Colonic mucosa (tissue), 4 donors: ENCODE measurements at regions of chr7 and their contacts with region 1.

Region 1: GRCh38 chr7:31488562-31489203 is 25.2 kb upstream of the ITPRID1 start:
- DNase-seq: peak; percentile 60
- H3K4me3 ChIP-seq: no peak overlapping the region
- H3K27ac ChIP-seq: no peak overlapping the region
- H3K4me1 ChIP-seq: no peaks in the 10 kb centered on the region
- H3K27me3 ChIP-seq: no peaks in the 10 kb centered on the region
- CTCF ChIP-seq: peak; percentile 69

Region 2: DNA sequence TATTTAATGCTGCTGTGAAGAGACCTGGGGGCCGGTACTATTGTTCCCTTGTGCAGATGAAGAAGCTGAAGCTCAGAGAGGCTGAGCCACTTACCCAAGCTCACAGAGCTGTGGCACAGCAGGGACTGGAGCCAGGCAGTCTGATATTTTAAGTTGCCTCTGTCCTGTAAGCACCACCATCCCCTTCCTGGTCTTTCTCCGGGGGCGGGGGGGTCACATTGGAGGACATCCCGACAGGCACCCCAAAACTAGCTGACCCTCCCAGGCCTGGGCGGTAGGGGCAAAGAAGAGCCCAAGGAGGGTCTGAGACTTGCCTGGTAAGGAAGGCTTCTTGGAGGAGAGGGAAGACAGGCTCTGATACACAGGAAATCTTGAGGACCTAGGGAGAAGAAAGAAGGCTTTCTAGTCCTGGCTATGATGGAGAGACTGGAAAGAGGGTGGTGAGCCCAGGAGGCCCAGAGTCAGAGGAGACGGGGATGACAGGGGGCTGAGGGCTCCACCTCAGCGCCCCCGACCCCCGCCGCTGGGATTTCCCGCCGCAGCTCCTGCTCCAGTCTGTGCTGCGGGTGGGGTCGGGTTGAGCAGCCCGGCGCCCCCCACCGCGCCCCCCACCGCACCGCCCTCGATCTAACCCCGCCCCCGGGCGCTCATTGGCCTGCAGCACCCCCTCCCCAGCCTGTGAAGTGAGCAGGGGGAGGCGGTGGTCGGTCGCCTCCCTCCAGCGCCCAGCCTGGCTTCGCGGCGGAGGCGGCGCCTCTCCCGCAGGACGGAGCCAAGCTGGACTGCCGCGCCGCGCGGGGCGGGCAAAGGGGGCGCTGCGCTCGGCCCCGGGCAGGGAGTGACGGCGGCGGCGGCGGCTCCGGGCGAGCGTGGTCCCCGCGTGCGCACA is 436.8 kb before region 1 on chr7 and contains the start of gene ADCYAP1R1:
- intact Hi-C with region 1: no loop called
- DNase-seq: no peak
- H3K4me3 ChIP-seq: peak within 1 kb of the TSS; percentile 7
- H3K27ac ChIP-seq: no peak within 1 kb of the TSS
- H3K4me1 ChIP-seq: no peaks in the 10 kb centered on the region
- H3K27me3 ChIP-seq: peaks cover 16% of the 10 kb centered on the region
- CTCF ChIP-seq: no peak
- total RNA-seq, gene ADCYAP1R1: 0.37 to 0.90 TPM

Region 3: DNA sequence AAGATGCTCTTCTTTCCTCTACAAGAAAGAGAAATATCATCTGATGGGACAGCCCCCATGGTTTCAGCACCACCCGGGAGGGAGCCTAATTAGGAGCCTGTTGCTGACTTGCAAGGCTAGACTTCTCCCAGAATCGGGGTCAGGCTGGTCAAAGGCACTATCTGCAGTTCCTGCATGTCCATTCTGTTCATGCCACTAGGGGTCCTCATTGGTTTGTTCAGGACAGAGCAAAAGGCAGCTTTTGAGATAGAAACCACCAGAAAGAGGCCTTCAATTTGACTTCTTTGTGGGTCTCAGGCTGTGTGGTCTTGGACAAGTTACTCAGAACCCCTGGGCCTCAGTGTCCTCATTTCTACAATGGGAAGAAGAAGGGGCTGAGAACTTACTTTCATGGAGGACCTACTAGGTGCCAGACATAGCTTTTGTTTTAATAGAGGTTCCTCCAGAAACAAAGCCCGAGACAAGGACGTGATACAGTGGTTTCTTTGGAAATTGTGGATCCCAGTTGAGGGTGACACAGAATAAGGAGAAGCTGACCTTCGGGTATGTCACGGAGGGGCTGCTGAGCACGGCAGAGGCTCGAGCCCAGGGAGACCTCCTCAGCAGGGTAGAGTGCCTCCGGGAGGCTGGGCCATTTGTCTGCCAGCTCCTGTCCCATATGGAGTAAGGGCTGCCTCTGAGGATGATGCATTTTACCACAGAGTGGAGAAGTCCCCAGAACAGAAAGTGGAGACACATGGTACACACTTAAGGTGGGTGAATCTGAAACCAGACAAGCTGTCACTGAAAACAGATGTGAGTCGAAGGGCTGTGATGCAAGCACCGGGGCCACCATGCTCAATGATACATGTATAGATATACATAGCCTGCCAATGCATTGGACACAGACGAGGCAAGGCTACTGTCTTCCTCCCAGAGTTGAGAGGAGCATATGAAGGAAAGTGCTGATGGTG is 115.1 kb before region 1 on chr7:
- intact Hi-C with region 1: loop called (anchors 5 kb)
- DNase-seq: peak; percentile 58
- H3K4me3 ChIP-seq: no peak overlapping the region
- H3K27ac ChIP-seq: no peak overlapping the region
- H3K4me1 ChIP-seq: no peaks in the 10 kb centered on the region
- H3K27me3 ChIP-seq: no peaks in the 10 kb centered on the region
- CTCF ChIP-seq: peak; percentile 54

Region 4: GRCh38 chr7:31948029-31948428 is 459.3 kb after region 1 on chr7:
- intact Hi-C with region 1: no loop called
- DNase-seq: no peak
- H3K4me3 ChIP-seq: no peak overlapping the region
- H3K27ac ChIP-seq: no peak overlapping the region
- H3K4me1 ChIP-seq: no peaks in the 10 kb centered on the region
- H3K27me3 ChIP-seq: no peaks in the 10 kb centered on the region
- CTCF ChIP-seq: no peak